Endothelial cell of umbilical vein (primary cell): ENCODE measurements at regions of chr16 and their contacts with region 1.

Region 1: GRCh38 chr16:69465083-69465721 is 40.8 kb downstream of the CYB5B start:
- DNase-seq: peak; percentile 26
- H3K4me3 ChIP-seq: no peak overlapping the region
- H3K27ac ChIP-seq: no peak overlapping the region
- H3K4me1 ChIP-seq: peaks cover 34% of the 10 kb centered on the region
- H3K27me3 ChIP-seq: no peaks in the 10 kb centered on the region
- CTCF ChIP-seq: peak in 1 of 2 donors; percentile 6
- POLR2A ChIP-seq: no peak

Region 2: DNA sequence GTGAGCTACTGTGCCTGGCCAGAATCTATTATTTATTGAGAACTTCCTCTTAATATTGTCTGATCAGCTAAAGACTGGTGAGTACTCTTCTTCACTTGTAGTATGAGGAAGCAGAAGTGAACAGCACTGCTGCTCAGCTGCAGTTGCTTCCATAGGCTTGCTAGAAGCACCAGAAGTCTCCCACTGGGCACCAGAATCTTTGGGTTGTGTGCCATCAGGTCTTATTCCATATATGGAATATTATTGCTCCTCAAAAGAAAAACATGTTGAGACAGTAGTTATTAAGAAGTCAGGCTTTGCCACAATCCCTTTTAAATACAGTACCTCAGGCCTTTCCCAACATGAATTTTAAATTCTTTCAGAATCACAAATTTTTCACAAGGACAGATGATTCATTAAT is 261.0 kb before region 1 on chr16:
- CTCF ChIA-PET with region 1: no interaction called
- POLR2A ChIA-PET with region 1: no interaction called
- dilution Hi-C with region 1: no loop called
- intact Hi-C with region 1: no loop called
- DNase-seq: no peak
- H3K4me3 ChIP-seq: no peak overlapping the region
- H3K27ac ChIP-seq: no peak overlapping the region
- H3K4me1 ChIP-seq: no peaks in the 10 kb centered on the region
- H3K27me3 ChIP-seq: no peaks in the 10 kb centered on the region
- CTCF ChIP-seq: no peak
- POLR2A ChIP-seq: no peak

Region 3: DNA sequence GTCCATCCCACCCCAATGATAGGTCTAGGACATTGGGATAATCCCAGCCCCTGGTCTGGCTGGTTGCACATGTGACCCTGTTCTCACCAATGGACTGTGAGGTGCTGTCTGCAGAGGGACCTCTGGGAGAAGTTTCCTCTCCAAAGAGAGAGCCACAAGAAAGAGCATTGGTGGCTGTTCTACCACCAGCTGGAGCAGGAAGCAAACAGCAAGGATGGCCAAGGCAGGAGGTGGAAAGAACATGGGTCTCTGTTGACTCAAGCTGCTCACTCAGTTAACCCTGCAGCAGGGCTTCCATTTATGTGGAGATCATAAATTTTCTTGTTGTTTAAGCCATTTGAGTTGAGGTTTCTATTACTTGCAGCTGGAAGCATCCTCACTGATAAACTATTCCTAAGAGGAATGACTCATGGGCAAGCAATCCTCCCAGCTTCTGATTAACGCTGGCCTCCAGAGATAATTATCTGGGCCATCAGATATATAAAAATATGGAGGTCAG is 11.8 kb after region 1 on chr16:
- CTCF ChIA-PET with region 1: interaction called, 10 read pairs
- POLR2A ChIA-PET with region 1: no interaction called
- dilution Hi-C with region 1: no loop called
- intact Hi-C with region 1: no loop called
- DNase-seq: peak; percentile 84
- H3K4me3 ChIP-seq: no peak overlapping the region
- H3K27ac ChIP-seq: peak overlapping the region; percentile 84
- H3K4me1 ChIP-seq: peaks cover 29% of the 10 kb centered on the region
- H3K27me3 ChIP-seq: no peaks in the 10 kb centered on the region
- CTCF ChIP-seq: no peak
- POLR2A ChIP-seq: no peak